CD4-positive, alpha-beta memory T cell (primary cell): ENCODE measurements at regions of chr2 and their contacts with region 1.

Region 1: DNA sequence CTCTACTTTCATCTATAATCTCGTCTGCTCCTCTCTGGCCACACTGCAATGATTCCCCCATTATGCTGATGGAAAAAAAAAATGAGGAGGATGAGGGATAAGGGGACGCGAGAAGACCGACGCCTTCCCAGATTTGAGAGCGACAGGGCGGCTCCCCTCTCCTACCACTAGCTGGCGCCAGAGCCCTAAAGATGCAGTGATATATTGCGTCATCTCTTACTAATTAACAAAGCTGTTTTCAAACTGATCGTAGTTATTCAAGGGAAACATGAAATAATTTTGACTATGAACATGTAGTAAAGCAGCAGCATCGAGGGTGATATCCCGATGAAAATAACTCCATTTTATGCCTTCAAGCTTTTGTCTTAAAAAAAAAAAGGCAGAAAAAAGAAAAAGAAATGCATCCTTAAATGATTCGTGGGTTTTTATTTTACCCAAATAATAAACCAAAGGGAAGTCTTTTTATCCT is 48.0 kb upstream of the HNRNPA3 start:
- DNase-seq: peak; percentile 70 to 76 (median 74)
- H3K4me3 ChIP-seq: no peak overlapping the region
- H3K4me3 Mint-ChIP-seq: no peak overlapping the region
- H3K27ac ChIP-seq: no peak overlapping the region
- H3K27ac Mint-ChIP-seq: no peak overlapping the region
- H3K4me1 ChIP-seq: peaks cover 25% of the 10 kb centered on the region
- H3K4me1 Mint-ChIP-seq: peaks cover 7 to 19% (median 12%) of the 10 kb centered on the region in 4 donors
- H3K27me3 ChIP-seq: no peaks in the 10 kb centered on the region
- H3K27me3 Mint-ChIP-seq: peaks cover 2 to 5% of the 10 kb centered on the region in 2 donors

Region 2: DNA sequence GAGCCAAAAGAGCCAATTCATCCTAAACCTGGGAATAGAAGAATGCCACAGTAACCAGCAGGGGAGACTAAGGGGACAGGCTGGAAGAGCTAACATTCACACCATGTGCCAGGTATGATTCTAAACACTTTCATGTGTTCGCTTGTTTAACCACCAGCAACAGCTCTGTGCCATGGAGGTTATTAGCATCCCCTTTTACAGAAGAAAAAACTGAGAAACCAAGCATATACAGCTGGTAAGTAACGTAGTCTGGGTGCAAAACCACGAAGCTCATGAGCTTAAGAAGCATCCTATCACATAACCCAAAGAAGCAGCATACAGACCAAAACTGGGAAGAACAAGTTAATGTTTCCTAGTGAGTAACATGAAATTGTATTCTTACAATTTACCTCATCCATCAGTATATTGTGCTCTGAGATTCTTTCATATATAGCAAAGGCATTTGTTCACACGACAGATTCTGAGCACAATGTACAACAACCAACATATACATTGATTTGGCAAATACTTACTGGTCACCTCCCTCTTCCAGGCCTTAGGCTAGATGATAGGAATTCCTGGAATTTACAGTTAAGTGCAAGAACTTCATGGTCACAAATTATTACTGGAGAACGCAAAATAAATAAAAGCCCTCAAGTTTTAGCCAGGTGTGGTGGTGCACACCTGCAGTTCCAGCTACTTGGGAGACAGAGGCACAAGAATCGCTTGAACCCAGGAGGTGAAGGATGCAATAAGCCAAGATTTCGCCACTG is 11.5 kb after region 1 on chr2:
- CTCF ChIA-PET with region 1: interaction called, 24 read pairs
- POLR2A ChIA-PET with region 1: no interaction called
- intact Hi-C with region 1: no loop called
- DNase-seq: no peak
- H3K4me3 ChIP-seq: no peak overlapping the region
- H3K4me3 Mint-ChIP-seq: no peak overlapping the region
- H3K27ac ChIP-seq: no peak overlapping the region
- H3K27ac Mint-ChIP-seq: no peak overlapping the region
- H3K4me1 ChIP-seq: no peaks in the 10 kb centered on the region
- H3K4me1 Mint-ChIP-seq: no peaks in the 10 kb centered on the region
- H3K27me3 ChIP-seq: no peaks in the 10 kb centered on the region
- H3K27me3 Mint-ChIP-seq: peaks cover 1 to 2% of the 10 kb centered on the region in 2 donors

Region 3: GRCh38 chr2:177229448-177230242 is 65.0 kb after region 1 on chr2:
- CTCF ChIA-PET with region 1: interaction called, 11 read pairs
- POLR2A ChIA-PET with region 1: interaction called, 5 read pairs
- intact Hi-C with region 1: no loop called
- DNase-seq: no peak
- H3K4me3 ChIP-seq: no peak overlapping the region
- H3K4me3 Mint-ChIP-seq: peak overlapping the region in 1 of 8 donors; percentile 15
- H3K27ac ChIP-seq: no peak overlapping the region
- H3K27ac Mint-ChIP-seq: peak overlapping the region in 6 of 7 donors; percentile 7 to 88 (median 66)
- H3K4me1 ChIP-seq: no peaks in the 10 kb centered on the region
- H3K4me1 Mint-ChIP-seq: peaks cover 25 to 60% (median 39%) of the 10 kb centered on the region in 4 donors
- H3K27me3 ChIP-seq: no peaks in the 10 kb centered on the region
- H3K27me3 Mint-ChIP-seq: no peaks in the 10 kb centered on the region

Region 4: GRCh38 chr2:177289824-177290628 is 125.4 kb after region 1 on chr2:
- CTCF ChIA-PET with region 1: interaction called, 192 read pairs
- POLR2A ChIA-PET with region 1: interaction called, 26 read pairs
- intact Hi-C with region 1: no loop called
- DNase-seq: peak in 4 of 5 donors; percentile 8 to 35 (median 20)
- H3K4me3 ChIP-seq: no peak overlapping the region
- H3K4me3 Mint-ChIP-seq: peak overlapping the region; percentile 22 to 90 (median 78)
- H3K27ac ChIP-seq: peak overlapping the region; percentile 16
- H3K27ac Mint-ChIP-seq: peak overlapping the region; percentile 66 to 96 (median 94)
- H3K4me1 ChIP-seq: peaks cover 20% of the 10 kb centered on the region
- H3K4me1 Mint-ChIP-seq: peaks cover 7 to 24% (median 13%) of the 10 kb centered on the region in 4 donors
- H3K27me3 ChIP-seq: no peaks in the 10 kb centered on the region
- H3K27me3 Mint-ChIP-seq: no peaks in the 10 kb centered on the region

Region 5: DNA sequence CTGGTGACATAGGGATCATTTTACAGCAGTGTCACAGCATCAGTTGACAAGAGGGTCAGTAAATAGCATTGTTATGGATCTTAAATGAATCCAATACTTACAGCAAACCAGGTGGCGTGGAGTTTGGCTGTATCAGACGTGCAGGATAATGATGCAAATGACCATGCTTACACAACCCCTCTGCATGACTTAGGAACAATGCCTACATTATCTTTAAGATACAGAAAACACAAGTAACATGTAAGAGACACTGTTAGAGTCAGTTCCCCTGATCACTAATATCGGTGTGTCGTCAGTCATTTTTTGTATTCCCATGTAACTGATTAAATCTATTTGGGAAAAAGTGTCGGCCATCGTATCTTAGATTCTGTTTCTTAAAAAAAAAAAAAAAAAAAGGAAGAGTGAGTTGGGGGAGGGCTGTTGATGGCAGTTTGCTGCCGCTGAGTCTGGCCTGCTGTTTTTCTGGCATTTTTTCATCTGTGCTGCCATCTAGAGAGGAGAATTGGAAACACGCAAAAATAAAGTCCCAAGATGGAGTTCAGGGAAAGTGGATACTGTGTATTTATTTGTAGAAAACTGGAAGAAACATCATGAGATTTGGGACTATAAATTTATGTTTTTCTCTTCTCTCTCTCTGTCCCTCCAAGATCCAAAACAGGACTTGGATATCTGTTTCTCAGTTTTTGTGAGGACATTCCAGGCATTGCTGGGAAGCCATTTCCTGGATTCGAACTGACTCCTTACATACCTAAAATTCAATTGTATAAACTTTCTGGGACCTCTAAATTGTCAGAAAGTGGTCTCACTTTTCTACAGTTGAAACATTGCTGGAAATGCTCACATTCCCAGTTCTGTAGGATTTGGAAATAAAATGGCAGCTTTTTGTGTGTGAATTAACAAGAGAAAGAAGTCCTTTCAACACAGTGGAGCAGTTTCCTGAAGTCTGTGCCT is 167.7 kb after region 1 on chr2:
- CTCF ChIA-PET with region 1: interaction called, 178 read pairs
- POLR2A ChIA-PET with region 1: interaction called, 9 read pairs
- intact Hi-C with region 1: loop called (anchors 1 kb)
- DNase-seq: peak in 4 of 5 donors; percentile 55 to 62 (median 60)
- H3K4me3 ChIP-seq: no peak overlapping the region
- H3K4me3 Mint-ChIP-seq: no peak overlapping the region
- H3K27ac ChIP-seq: no peak overlapping the region
- H3K27ac Mint-ChIP-seq: peak overlapping the region in 4 of 7 donors; percentile 33 to 78 (median 64)
- H3K4me1 ChIP-seq: peaks cover 10% of the 10 kb centered on the region
- H3K4me1 Mint-ChIP-seq: peaks cover 0 to 13% (median 6%) of the 10 kb centered on the region in 4 donors
- H3K27me3 ChIP-seq: no peaks in the 10 kb centered on the region
- H3K27me3 Mint-ChIP-seq: no peaks in the 10 kb centered on the region

Region 6: DNA sequence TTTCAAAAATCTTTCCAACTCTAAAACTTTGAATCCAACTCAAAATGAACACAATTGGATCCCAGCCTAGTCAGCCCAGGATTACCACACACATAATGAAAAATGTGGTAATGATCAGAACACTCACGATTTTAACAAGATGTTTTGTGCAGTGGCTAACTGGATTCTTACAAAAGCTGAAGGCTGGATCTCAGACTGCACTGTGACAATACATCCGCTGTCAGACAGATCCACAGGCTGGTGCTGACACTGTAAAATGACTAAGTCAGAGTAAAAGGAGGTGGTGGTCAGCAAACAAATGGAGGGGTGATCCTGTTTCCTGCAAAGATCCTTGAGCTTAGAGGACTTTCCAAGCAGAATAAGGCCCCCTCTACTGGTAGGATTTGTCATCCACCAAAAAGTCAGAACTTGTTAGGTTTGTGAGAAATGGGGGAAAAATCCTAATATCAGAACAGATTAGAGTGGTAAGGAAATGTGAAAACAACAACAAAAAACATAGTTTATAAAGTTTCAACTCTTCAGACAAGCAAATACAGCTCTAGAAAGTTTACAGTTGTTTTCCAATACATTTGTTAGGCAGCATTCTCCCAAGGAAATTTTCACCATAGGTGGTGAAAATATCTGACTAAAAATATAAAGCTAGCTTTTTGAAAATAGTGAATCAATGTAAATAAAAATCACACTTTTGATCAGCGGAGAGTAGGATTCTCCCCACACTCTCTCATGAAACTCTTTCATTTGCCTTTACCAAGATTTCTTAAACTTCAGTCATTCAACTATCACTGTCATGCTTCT is 439.9 kb after region 1 on chr2:
- CTCF ChIA-PET with region 1: interaction called, 22 read pairs
- POLR2A ChIA-PET with region 1: interaction called, 5 read pairs
- intact Hi-C with region 1: no loop called
- DNase-seq: peak in 2 of 5 donors; percentile 6 to 8
- H3K4me3 ChIP-seq: no peak overlapping the region
- H3K4me3 Mint-ChIP-seq: no peak overlapping the region
- H3K27ac ChIP-seq: no peak overlapping the region
- H3K27ac Mint-ChIP-seq: peak overlapping the region in 1 of 7 donors; percentile 37
- H3K4me1 ChIP-seq: no peaks in the 10 kb centered on the region
- H3K4me1 Mint-ChIP-seq: no peaks in the 10 kb centered on the region
- H3K27me3 ChIP-seq: no peaks in the 10 kb centered on the region
- H3K27me3 Mint-ChIP-seq: peaks cover 9% of the 10 kb centered on the region in 2 donors